Breast epithelium (tissue), 4 donors: ENCODE measurements at regions of chr17 and their contacts with region 1.

Region 1: DNA sequence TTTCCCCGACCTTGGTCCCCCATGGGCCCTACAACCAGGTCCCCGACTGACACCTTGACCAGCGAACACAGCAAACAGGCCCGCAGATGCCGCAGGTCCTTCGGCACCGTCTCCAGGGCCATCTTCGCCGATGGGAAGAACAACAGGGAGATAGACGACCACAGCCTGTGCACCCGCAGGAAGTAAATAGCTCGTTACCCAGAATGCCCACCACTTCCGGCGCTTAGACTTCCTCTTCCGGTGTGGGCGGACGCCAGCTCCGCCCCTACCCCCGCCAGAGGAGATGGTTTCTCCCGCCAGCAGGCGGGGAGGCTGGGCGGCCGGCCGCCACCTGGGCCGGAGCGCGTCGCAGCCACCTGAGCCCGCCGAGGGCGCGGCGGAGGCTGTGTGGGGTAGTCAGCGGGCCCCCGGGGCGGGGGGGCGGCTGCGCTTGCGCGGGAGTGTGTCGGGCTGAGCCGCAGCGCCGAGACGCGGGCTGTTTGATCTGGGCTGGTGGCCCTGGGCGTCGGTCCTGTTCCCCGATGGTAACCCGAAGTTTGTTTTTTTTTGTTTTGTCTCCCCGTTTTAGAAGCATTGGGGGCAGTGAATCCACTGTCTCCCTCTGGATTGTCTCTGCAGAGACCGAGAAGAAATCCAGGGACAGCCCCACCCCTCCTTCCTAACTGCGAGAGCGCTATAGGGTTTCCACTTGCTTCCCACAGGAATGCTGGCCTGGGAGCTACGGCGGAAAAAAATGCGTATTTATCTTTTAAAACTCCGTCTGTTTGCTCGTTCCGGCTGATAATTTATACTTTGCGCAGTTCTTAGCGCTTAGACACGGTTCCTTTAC is at the start of gene SUPT4H1:
- DNase-seq: peak; percentile 88
- H3K4me3 ChIP-seq: peak within 1 kb of the TSS; percentile 68 to 95 (median 89)
- H3K27ac ChIP-seq: peak within 1 kb of the TSS; percentile 94 to 95
- H3K4me1 ChIP-seq: peaks cover 4 to 6% of the 10 kb centered on the region in 2 donors
- H3K27me3 ChIP-seq: no peaks in the 10 kb centered on the region
- CTCF ChIP-seq: peak in 2 of 3 donors; percentile 11 to 39
- POLR2A ChIP-seq: peak; percentile 60
- total RNA-seq, gene SUPT4H1: 46.4 to 61.6 (median 48.2) TPM

Region 2: DNA sequence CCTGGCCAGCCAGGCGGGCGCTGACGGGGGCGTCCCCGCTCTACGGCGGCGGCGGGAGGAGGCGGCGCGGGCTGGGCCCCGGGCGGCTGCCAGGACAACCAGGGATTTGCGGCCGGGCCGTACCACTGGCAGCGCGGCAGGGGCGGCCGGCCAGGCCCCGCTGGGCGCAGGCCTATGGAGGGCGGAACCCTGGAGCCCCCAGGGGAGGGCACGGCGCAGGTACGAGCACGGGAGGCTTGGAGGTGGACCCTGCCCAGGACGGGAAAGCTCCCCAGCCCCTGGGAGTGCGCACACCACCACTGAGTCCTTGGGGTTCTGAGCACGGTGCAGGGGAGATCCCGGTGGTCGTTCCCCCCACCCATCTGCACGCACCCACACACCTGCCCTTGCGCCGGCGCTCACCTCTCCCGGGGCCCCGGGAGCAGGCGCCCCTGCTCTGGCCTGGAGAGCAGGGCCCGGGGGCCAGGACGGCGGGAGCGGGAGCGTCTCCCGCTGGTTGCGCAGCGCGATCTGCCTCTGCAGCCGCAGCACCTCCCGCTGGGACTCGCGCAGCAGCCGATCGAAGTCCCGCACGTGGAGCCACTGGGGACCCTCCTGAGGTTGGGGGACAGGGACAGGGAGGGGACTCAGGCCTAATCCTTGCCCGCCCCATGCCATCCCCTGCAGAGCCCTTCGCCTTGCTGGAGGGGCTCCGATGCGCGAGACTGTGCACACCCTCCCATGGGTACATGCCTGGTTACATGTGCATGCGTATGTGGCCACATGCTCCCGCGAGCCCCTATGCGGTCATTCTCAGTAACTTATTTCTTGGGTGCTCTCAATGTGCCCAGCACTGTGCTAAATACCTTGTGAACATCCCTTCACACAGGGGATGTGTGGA is 27.6 kb before region 1 on chr17:
- intact Hi-C with region 1: no loop called
- DNase-seq: peak in 1 of 2 donors; percentile 71
- H3K4me3 ChIP-seq: peak overlapping the region; percentile 53 to 76 (median 76)
- H3K27ac ChIP-seq: peak overlapping the region; percentile 64 to 77
- H3K4me1 ChIP-seq: no peaks in the 10 kb centered on the region
- H3K27me3 ChIP-seq: no peaks in the 10 kb centered on the region
- CTCF ChIP-seq: no peak
- POLR2A ChIP-seq: no peak

Region 3: DNA sequence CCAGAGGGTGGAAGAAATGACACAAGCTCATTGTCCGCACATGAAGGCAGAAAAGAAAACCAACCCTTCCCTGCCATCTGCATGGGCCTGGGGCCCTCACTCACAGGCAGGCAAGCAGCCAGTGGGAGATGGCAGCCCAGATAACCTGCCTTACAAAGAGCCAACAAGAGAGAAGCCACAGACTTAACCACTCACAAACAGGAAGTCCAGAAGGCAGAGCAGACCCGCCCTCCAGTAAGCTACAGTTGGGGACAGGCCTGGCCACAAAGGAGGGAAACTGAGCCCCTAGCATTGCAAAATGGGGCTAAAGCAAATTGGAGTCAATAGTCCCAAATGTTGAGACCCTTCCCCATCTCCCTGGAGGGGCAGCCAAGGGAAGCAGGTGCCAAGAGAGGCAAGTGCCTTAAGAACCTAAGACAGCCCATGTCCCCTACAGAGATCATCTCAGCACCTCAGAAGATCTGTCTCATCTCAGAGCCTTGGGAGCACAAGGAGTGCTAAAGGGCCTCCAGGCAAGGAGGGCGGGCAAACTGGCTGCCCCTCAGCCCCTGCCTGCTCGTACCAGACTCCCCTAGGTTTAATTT is 16.3 kb before region 1 on chr17:
- intact Hi-C with region 1: loop called (anchors 1 kb)
- DNase-seq: peak; percentile 65 to 83
- H3K4me3 ChIP-seq: no peak overlapping the region
- H3K27ac ChIP-seq: peak overlapping the region; percentile 81 to 89
- H3K4me1 ChIP-seq: peaks cover 12 to 22% of the 10 kb centered on the region in 2 donors
- H3K27me3 ChIP-seq: no peaks in the 10 kb centered on the region
- CTCF ChIP-seq: no peak
- POLR2A ChIP-seq: no peak

Region 4: DNA sequence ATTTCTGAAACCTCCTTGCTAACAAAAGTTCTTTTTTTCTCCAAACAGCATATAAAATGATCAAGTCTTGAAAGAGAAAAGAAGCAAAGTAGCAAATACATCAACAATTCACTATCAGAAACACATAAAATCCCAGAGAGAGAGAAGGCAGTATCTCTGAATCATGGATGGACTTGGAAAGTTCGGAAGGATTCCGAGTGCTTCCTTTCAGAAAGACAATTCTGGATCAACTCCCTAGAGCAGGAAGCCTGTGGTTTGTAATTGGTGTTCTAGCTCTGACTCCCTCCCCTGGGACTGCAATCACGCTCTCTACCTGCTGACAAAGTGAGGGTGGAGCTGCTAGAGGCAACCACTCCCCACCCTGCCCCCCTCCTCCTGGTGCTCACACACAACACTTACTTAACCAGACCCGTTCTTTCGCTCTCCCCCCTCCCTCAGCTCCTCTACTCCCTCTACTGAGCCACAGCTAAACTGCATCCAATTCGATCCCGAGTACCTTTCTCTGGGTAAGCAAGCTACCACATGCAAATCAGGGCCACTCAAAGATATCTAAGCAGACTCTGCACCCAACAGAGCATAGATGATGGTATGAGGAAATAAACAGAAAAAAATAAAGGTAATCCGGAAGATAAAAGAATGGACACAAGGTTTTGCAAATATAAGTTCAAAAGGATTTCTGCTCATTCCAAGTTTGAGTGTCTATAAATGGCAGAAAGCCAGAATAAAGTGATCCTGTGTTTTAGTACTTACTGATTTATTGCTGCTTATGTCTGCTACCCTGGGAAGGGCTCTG is 65.3 kb after region 1 on chr17 and contains the start of gene RNF43:
- intact Hi-C with region 1: loop called (anchors 2 kb)
- DNase-seq: peak; percentile 93 to 98
- H3K4me3 ChIP-seq: peak within 1 kb of the TSS; percentile 17 to 59 (median 49)
- H3K27ac ChIP-seq: peak within 1 kb of the TSS; percentile 68 to 72
- H3K4me1 ChIP-seq: no peaks in the 10 kb centered on the region
- H3K27me3 ChIP-seq: no peaks in the 10 kb centered on the region
- CTCF ChIP-seq: peak; percentile 68 to 98 (median 87)
- POLR2A ChIP-seq: peak; percentile 66
- total RNA-seq, gene RNF43: 8.5 to 19.0 TPM in 2 of 3 donors, not detected in the other